Ascending aorta (tissue), 2 donors: ENCODE measurements at regions of chrX and their contacts with region 1.

Region 1: DNA sequence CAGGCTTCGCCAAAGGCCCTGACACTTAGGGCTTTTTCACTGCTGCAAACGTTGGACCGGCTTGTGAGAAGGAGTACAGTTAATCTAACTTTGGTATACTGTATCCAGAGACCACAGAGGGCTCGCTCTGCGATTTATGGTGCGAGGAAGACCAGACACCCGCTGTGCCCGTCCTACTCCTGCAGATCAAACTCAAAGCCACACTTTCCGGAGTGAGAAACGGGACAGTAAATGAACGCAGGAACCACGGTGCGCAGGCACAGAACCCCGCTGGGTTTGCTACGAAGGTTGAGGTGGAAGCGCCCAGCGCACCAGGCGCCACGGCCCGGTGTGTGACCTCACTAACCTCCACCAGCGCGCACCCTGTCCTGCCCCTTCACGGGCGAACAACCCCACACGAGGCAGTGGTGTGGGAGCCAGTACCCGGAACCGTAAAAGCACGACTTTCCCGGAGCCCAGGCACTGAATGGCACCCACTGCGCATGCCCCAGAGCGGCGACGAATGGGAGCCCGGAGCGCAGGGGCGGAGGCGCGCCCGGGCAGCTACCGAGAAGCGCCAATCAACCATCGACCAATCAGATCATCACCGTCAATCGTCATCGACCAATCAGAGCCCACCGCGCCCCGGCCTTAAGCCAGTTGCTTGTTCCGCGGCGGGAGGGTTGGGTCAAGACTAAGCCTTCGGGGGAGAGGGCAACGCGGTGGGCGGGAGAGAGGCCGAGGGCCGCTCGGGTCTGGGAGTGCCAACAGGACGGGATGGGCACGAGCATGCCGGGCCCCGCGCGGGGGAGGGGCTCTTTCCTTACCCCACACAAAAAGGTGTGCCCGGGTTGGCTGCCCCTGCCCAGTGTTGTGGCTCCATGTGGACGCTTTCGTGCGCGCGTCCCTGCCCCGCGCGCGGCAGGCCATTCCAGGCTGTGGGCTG is 21.3 kb upstream of the WDR45 start:
- DNase-seq: peak; percentile 64 to 95
- H3K4me3 ChIP-seq: peak overlapping the region; percentile 59 to 72
- H3K27ac ChIP-seq: peak overlapping the region; percentile 63 to 65
- H3K4me1 ChIP-seq: no peaks in the 10 kb centered on the region
- H3K27me3 ChIP-seq: no peaks in the 10 kb centered on the region
- CTCF ChIP-seq: no peak

Region 2: GRCh38 chrX:48972220-48973167 is 128.5 kb before region 1 on chrX:
- intact Hi-C with region 1: loop called (anchors 10 kb)
- DNase-seq: peak in 1 of 2 donors; percentile 67
- H3K4me3 ChIP-seq: peak overlapping the region; percentile 43 to 67
- H3K27ac ChIP-seq: peak overlapping the region; percentile 62 to 65
- H3K4me1 ChIP-seq: no peaks in the 10 kb centered on the region
- H3K27me3 ChIP-seq: no peaks in the 10 kb centered on the region
- CTCF ChIP-seq: peak; percentile 18 to 44 (median 25)

Region 3: GRCh38 chrX:49079489-49080428 is 21.2 kb before region 1 on chrX and contains the start of gene WDR45:
- intact Hi-C with region 1: loop called (anchors 1 kb)
- DNase-seq: peak in 1 of 2 donors; percentile 88
- H3K4me3 ChIP-seq: peak within 1 kb of the TSS; percentile 64 to 78
- H3K27ac ChIP-seq: peak within 1 kb of the TSS; percentile 92 to 95
- H3K4me1 ChIP-seq: peaks cover 0 to 2% of the 10 kb centered on the region in 2 donors
- H3K27me3 ChIP-seq: no peaks in the 10 kb centered on the region
- CTCF ChIP-seq: no peak
- total RNA-seq, gene WDR45: 169 TPM